Right ventricle myocardium inferior (tissue), 1 donor: ENCODE measurements at regions of chr5 and their contacts with region 1.

Region 1: DNA sequence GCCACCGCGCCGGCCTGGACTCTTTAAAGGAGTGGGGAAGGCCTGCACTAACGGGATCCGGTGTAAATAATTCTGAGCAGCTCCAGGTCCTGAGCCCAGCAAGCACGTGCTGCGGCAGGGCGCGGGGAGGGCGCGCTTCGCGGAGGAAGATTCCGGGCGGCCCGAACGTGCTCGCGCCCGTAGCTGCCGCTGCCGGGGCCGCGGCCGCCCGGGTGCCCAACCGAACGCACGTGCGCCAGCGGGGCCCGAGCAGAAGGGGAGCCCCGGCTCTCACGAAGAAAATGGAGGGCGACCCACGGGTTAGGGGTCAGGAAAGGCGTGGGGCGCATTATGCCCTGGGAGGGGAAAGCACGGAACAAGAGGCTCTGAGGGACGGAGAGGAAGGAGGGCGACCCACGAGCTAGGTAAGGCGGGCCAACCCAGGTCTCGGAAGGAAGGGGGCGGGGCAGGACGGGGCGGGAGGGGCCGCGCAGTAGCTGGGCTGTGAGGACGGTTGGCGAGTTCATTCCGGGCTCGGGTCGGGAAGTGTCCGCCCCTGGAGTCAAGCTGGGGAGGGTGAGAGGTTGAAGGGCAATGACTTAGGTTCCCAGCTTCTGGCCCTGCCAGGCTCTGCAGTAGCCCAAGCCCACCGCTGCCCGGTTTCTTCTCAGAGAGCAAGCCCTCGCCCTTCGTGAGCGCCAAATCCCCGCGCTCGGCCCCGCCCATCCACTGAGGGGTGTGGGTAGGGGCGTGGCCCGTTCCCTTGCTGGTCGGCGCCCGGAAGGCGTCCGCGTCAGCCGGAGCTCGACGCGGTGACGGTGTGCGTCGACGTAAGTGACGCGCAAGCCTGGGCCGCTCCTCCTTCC is at the start of gene ZNF131:
- DNase-seq: peak; percentile 99
- ATAC-seq: peak; percentile 98
- total RNA-seq, gene ZNF131: 14.6 TPM

Region 2: GRCh38 chr5:43105369-43106289 is 15.3 kb before region 1 on chr5:
- intact Hi-C with region 1: loop called (anchors 2 kb)
- DNase-seq: peak; percentile 91
- ATAC-seq: peak; percentile 95

Region 3: DNA sequence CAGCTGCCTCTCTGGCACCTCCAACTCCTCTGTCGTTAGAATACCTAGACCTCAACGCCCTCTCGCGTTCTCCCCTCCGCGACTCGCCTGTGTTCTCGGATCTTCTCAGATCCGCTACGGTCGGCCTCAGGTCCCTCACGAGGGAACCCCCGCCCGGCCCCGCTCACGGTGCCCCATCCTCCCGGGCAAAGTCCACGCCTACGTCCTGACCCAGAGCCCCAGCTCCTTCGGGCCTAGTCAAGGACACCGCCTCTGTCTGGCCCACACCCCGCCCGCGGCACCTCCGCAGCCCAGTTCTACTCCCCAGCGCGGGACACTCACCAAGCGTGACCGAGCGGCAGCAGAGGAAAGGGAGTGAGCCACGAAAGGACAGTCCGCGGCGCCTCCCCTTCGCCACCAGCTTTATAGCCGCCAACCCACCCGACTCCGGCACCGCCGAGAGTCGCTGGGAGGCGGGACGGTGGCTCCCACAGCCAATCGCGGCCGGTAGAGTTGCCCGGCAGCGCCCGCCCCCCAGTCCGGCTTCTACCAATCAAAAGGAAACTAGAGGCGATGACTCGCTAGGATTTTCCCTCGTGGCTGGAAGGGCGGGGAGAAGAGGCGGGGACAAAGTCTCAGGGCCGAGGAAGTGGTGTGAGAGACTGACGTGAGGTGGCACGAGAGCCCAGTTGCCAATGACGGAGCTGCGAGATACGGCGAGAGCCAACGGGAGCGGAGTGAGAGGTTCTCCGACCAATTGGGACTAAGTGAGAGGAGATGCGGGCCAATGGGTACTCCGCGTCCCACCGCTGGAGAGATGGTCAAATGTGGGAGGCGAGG is 192.3 kb after region 1 on chr5 and contains the start of gene HMGCS1:
- intact Hi-C with region 1: loop called (anchors 2 kb)
- DNase-seq: peak; percentile 98
- ATAC-seq: peak; percentile 99
- total RNA-seq, gene HMGCS1: 23.1 TPM